CD8-positive, alpha-beta T cell (primary cell): ENCODE measurements at regions of chr6 and their contacts with region 1.

Region 1: GRCh38 chr6:34887753-34888513 is at the start of gene TAF11:
- DNase-seq: peak; percentile 74 to 96 (median 92)
- ATAC-seq: peak; percentile 67
- H3K4me3 ChIP-seq: peak within 1 kb of the TSS; percentile 84 to 93
- H3K4me3 Mint-ChIP-seq: peak within 1 kb of the TSS; percentile 100
- H3K27ac ChIP-seq: peak within 1 kb of the TSS; percentile 90 to 93
- H3K27ac Mint-ChIP-seq: peak within 1 kb of the TSS; percentile 99
- H3K4me1 ChIP-seq: peaks cover 21% of the 10 kb centered on the region
- H3K4me1 Mint-ChIP-seq: peaks cover 66% of the 10 kb centered on the region
- H3K27me3 ChIP-seq: no peaks in the 10 kb centered on the region
- H3K27me3 Mint-ChIP-seq: no peaks in the 10 kb centered on the region
- CTCF ChIP-seq: no peak
- total RNA-seq, gene TAF11: 40.0 to 40.6 TPM

Region 2: GRCh38 chr6:34236131-34236996 is 651.6 kb before region 1 on chr6 and contains the start of gene HMGA1:
- CTCF ChIA-PET with region 1: no interaction called
- POLR2A ChIA-PET with region 1: no interaction called
- intact Hi-C with region 1: loop called in 1 of 2 experiments (anchors 5 kb)
- DNase-seq: peak; percentile 75 to 95 (median 90)
- ATAC-seq: peak; percentile 70
- H3K4me3 ChIP-seq: peak within 1 kb of the TSS; percentile 77 to 90
- H3K4me3 Mint-ChIP-seq: peak within 1 kb of the TSS; percentile 90
- H3K27ac ChIP-seq: peak within 1 kb of the TSS; percentile 71 to 95
- H3K27ac Mint-ChIP-seq: peak within 1 kb of the TSS; percentile 99
- H3K4me1 ChIP-seq: peaks cover 22% of the 10 kb centered on the region
- H3K4me1 Mint-ChIP-seq: peaks cover 33% of the 10 kb centered on the region
- H3K27me3 ChIP-seq: no peaks in the 10 kb centered on the region
- H3K27me3 Mint-ChIP-seq: no peaks in the 10 kb centered on the region
- CTCF ChIP-seq: no peak
- total RNA-seq, gene HMGA1: 107 to 113 TPM

Region 3: DNA sequence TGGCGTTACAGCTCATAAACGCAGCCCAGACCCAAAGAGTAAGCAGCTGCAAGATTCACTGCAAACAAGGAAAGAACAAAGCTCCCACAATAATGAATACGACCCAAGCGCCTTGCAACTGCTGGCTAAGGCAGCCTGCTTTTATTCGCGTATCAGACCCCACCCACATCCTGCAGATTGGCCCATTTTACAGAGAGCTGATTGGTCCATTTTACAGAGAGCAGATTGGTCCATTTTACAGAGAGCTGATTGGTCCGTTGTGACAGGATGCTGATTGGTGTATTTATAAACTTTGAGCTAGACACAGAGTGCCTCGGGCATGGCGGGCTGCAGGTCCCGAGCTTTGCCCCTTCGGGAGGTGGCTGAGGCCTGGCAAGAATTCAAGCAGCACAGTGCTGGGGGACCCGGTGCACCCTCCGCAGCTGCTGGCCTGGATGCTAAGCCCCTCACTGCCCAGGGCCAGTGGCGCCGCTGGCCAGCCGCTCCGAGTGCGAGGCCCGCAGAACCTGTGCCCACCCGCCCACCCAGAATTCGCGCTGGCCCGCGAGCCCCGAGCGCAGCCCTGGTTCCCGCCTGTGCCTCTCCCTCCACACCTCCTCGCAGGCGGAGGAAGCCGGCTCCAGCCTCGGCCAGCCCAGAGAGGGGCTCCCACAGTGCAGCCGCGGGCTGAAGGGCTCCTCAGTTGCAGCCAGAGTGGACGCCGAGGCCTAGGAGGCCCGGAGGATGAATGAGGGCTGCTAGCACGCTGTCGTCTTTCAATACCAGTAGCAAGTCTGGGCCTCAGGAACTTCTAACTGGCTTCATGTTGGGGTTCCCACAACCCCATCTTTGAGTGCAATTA is 450.9 kb before region 1 on chr6:
- CTCF ChIA-PET with region 1: no interaction called
- POLR2A ChIA-PET with region 1: no interaction called
- intact Hi-C with region 1: no loop called
- DNase-seq: no peak
- ATAC-seq: no peak
- H3K4me3 ChIP-seq: no peak overlapping the region
- H3K4me3 Mint-ChIP-seq: no peak overlapping the region
- H3K27ac ChIP-seq: no peak overlapping the region
- H3K27ac Mint-ChIP-seq: no peak overlapping the region
- H3K4me1 ChIP-seq: no peaks in the 10 kb centered on the region
- H3K4me1 Mint-ChIP-seq: no peaks in the 10 kb centered on the region
- H3K27me3 ChIP-seq: no peaks in the 10 kb centered on the region
- H3K27me3 Mint-ChIP-seq: no peaks in the 10 kb centered on the region
- CTCF ChIP-seq: no peak

Region 4: GRCh38 chr6:34526992-34527728 is 360.8 kb before region 1 on chr6:
- CTCF ChIA-PET with region 1: no interaction called
- POLR2A ChIA-PET with region 1: no interaction called
- intact Hi-C with region 1: loop called in 1 of 2 experiments (anchors 2 kb)
- DNase-seq: peak; percentile 91 to 99 (median 96)
- ATAC-seq: peak; percentile 98
- H3K4me3 ChIP-seq: peak overlapping the region; percentile 17 to 31
- H3K4me3 Mint-ChIP-seq: peak overlapping the region; percentile 58
- H3K27ac ChIP-seq: peak overlapping the region; percentile 31 to 58
- H3K27ac Mint-ChIP-seq: peak overlapping the region; percentile 80
- H3K4me1 ChIP-seq: peaks cover 7% of the 10 kb centered on the region
- H3K4me1 Mint-ChIP-seq: peaks cover 14% of the 10 kb centered on the region
- H3K27me3 ChIP-seq: no peaks in the 10 kb centered on the region
- H3K27me3 Mint-ChIP-seq: no peaks in the 10 kb centered on the region
- CTCF ChIP-seq: peak; percentile 51

Region 5: DNA sequence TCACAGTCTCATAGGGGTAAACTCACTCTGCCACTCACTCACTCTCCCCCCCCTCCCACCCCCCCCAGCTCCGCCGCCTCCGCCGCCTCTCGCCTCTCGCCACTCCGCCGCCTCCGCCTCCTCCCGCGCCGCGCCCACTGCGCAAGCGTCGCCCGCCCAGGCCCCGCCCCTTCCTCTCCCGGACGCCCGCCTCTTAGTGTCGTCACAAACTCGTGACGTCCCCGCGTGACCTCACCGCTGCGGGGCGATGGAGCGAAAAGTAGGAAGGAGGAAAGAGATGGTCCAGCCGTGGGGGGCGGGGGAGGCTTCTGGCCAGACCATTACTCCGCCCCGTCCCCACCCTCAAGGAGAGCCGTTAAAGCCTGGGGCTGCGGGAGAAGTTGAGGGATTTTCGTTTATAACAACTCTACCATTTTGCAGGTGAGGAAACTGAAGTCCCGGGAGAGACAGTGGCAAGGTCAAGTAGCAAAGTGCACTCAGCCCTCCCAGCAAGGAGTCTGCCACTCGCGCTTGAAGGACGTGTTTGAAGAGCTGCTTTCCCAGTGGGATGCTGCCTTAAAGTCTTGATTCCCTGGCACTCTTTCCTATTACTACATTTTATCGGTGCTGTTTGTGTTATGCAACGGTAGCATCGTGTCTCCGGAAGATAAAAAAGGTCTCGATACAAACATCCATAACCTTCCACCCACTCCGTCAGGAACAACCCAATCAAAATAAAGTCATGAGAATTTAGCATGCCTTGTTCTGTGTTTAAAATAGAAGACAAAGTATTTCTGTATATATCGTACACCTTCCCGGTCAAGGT is 191.0 kb before region 1 on chr6 and contains the start of gene ILRUN:
- CTCF ChIA-PET with region 1: no interaction called
- POLR2A ChIA-PET with region 1: interaction called, 3 read pairs
- intact Hi-C with region 1: loop called (anchors 2 kb)
- DNase-seq: peak; percentile 93 to 98 (median 97)
- ATAC-seq: peak; percentile 92
- H3K4me3 ChIP-seq: peak within 1 kb of the TSS; percentile 94 to 96
- H3K4me3 Mint-ChIP-seq: peak within 1 kb of the TSS; percentile 97
- H3K27ac ChIP-seq: peak within 1 kb of the TSS; percentile 93 to 98
- H3K27ac Mint-ChIP-seq: peak within 1 kb of the TSS; percentile 99
- H3K4me1 ChIP-seq: peaks cover 24% of the 10 kb centered on the region
- H3K4me1 Mint-ChIP-seq: peaks cover 43% of the 10 kb centered on the region
- H3K27me3 ChIP-seq: no peaks in the 10 kb centered on the region
- H3K27me3 Mint-ChIP-seq: no peaks in the 10 kb centered on the region
- CTCF ChIP-seq: no peak
- total RNA-seq, gene ILRUN: 54.8 to 58.8 TPM

Region 6: GRCh38 chr6:34791701-34792235 is 96.2 kb before region 1 on chr6 and contains the start of gene BLTP3A:
- CTCF ChIA-PET with region 1: interaction called, 4 read pairs
- POLR2A ChIA-PET with region 1: interaction called, 21 read pairs
- intact Hi-C with region 1: loop called (anchors 1 kb)
- DNase-seq: peak; percentile 48 to 91 (median 71)
- ATAC-seq: peak; percentile 90
- H3K4me3 ChIP-seq: peak within 1 kb of the TSS; percentile 75 to 95
- H3K4me3 Mint-ChIP-seq: peak within 1 kb of the TSS; percentile 99
- H3K27ac ChIP-seq: peak within 1 kb of the TSS; percentile 75 to 79
- H3K27ac Mint-ChIP-seq: peak within 1 kb of the TSS; percentile 94
- H3K4me1 ChIP-seq: peaks cover 12% of the 10 kb centered on the region
- H3K4me1 Mint-ChIP-seq: peaks cover 29% of the 10 kb centered on the region
- H3K27me3 ChIP-seq: no peaks in the 10 kb centered on the region
- H3K27me3 Mint-ChIP-seq: no peaks in the 10 kb centered on the region
- CTCF ChIP-seq: no peak
- total RNA-seq, gene BLTP3A: 8.8 to 9.3 TPM

Region 7: GRCh38 chr6:35259194-35259947 is 371.4 kb after region 1 on chr6 and contains the start of gene ZNF76:
- CTCF ChIA-PET with region 1: no interaction called
- POLR2A ChIA-PET with region 1: interaction called, 4 read pairs
- intact Hi-C with region 1: loop called (anchors 2 kb)
- DNase-seq: peak; percentile 86 to 97 (median 93)
- ATAC-seq: peak; percentile 73
- H3K4me3 ChIP-seq: peak within 1 kb of the TSS; percentile 75 to 95
- H3K4me3 Mint-ChIP-seq: peak within 1 kb of the TSS; percentile 97
- H3K27ac ChIP-seq: peak within 1 kb of the TSS; percentile 88 to 96
- H3K27ac Mint-ChIP-seq: peak within 1 kb of the TSS; percentile 99
- H3K4me1 ChIP-seq: peaks cover 42% of the 10 kb centered on the region
- H3K4me1 Mint-ChIP-seq: peaks cover 55% of the 10 kb centered on the region
- H3K27me3 ChIP-seq: no peaks in the 10 kb centered on the region
- H3K27me3 Mint-ChIP-seq: no peaks in the 10 kb centered on the region
- CTCF ChIP-seq: no peak
- total RNA-seq, gene ZNF76: 54.6 to 57.8 TPM

Region 8: DNA sequence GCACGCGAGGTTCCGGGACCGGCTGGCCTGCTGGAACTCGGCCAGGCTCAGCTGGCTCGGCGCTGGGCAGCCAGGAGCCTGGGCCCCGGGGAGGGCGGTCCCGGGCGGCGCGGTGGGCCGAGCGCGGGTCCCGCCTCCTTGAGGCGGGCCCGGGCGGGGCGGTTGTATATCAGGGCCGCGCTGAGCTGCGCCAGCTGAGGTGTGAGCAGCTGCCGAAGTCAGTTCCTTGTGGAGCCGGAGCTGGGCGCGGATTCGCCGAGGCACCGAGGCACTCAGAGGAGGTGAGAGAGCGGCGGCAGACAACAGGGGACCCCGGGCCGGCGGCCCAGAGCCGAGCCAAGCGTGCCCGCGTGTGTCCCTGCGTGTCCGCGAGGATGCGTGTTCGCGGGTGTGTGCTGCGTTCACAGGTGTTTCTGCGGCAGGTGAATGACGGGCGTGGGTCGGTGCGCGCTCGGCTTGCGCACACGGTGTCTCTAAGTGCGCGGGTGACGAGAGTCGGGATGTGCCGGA is 1790.6 kb after region 1 on chr6 and contains the start of gene CDKN1A:
- CTCF ChIA-PET with region 1: no interaction called
- POLR2A ChIA-PET with region 1: no interaction called
- intact Hi-C with region 1: loop called in 1 of 2 experiments (anchors 5 kb)
- DNase-seq: peak; percentile 28 to 87 (median 73)
- ATAC-seq: peak; percentile 45
- H3K4me3 ChIP-seq: peak within 1 kb of the TSS; percentile 77 to 78
- H3K4me3 Mint-ChIP-seq: peak within 1 kb of the TSS; percentile 92
- H3K27ac ChIP-seq: no peak within 1 kb of the TSS
- H3K27ac Mint-ChIP-seq: peak within 1 kb of the TSS; percentile 87
- H3K4me1 ChIP-seq: peaks cover 25% of the 10 kb centered on the region
- H3K4me1 Mint-ChIP-seq: peaks cover 25% of the 10 kb centered on the region
- H3K27me3 ChIP-seq: peaks cover 0 to 10% of the 10 kb centered on the region in 2 experiments
- H3K27me3 Mint-ChIP-seq: peaks cover 3% of the 10 kb centered on the region
- CTCF ChIP-seq: no peak
- total RNA-seq, gene CDKN1A: 71.3 to 78.7 TPM